ENCODE measurements at regions of chr7 and their contacts with region 1.

Region 1: GRCh38 chr7:5363729-5364128 is 59.9 kb downstream of the TNRC18 start:
- DNase-seq: no peak
- H3K4me3 ChIP-seq: no peak overlapping the region
- H3K27ac ChIP-seq: peak overlapping the region; percentile 62 to 73 (median 64)
- H3K4me1 ChIP-seq: peaks cover 11 to 97% (median 87%) of the 10 kb centered on the region in 4 donors
- H3K27me3 ChIP-seq: no peaks in the 10 kb centered on the region
- CTCF ChIP-seq: no peak
- EP300 ChIP-seq: no peak
- POLR2A ChIP-seq: no peak

Region 2: GRCh38 chr7:5248201-5248885 is 115.4 kb before region 1 on chr7:
- intact Hi-C with region 1: loop called (anchors 10 kb)
- DNase-seq: no peak
- H3K4me3 ChIP-seq: peak overlapping the region in 1 of 4 donors; percentile 7
- H3K27ac ChIP-seq: peak overlapping the region; percentile 41 to 65 (median 54)
- H3K4me1 ChIP-seq: peaks cover 0 to 9% (median 0%) of the 10 kb centered on the region in 4 donors
- H3K27me3 ChIP-seq: no peaks in the 10 kb centered on the region
- CTCF ChIP-seq: no peak
- EP300 ChIP-seq: no peak
- POLR2A ChIP-seq: no peak

Region 3: GRCh38 chr7:5445981-5446594 is 82.4 kb after region 1 on chr7:
- intact Hi-C with region 1: loop called (anchors 5 kb)
- DNase-seq: no peak
- H3K4me3 ChIP-seq: no peak overlapping the region
- H3K27ac ChIP-seq: no peak overlapping the region
- H3K4me1 ChIP-seq: peaks cover 0 to 39% (median 24%) of the 10 kb centered on the region in 4 donors
- H3K27me3 ChIP-seq: no peaks in the 10 kb centered on the region
- CTCF ChIP-seq: no peak
- EP300 ChIP-seq: no peak
- POLR2A ChIP-seq: no peak

Region 4: DNA sequence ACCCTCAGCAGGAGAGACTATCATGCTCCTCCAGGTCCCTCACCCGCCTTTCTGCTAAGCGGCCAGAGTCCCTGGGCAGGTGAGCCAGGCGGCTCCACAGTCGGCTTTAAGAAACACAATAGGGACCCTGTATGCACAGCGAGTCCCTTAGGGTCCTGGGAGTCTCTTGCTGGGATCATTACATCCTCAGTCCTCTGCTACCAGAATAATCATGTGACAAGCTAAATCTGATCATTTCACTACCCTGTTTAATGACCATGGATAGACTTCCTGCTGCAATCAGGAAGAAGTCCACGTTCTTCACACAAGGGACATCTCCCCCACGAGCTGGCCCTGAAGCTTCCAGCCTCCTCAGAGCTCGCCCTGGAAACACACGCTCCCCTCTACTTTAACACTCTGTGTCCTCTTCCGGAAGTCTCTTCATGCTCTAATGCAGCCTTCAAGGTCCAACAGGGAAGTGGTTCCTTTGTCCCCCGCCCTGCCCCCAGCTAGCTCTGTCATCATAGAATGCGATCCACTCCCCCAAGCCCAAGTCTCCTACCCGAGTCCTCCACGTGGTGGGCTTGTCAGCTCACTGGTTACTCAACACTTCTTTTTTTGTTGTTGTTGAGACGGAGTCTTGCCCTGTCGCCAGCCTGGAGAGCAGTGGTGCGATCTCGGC is 316.2 kb after region 1 on chr7:
- intact Hi-C with region 1: loop called (anchors 10 kb)
- DNase-seq: no peak
- H3K4me3 ChIP-seq: no peak overlapping the region
- H3K27ac ChIP-seq: peak overlapping the region; percentile 76 to 96 (median 91)
- H3K4me1 ChIP-seq: peaks cover 58 to 100% (median 100%) of the 10 kb centered on the region in 4 donors
- H3K27me3 ChIP-seq: no peaks in the 10 kb centered on the region
- CTCF ChIP-seq: no peak
- EP300 ChIP-seq: no peak
- POLR2A ChIP-seq: no peak

Measured in esophagus muscularis mucosa (tissue), 4 donors.